Naive thymus-derived CD8-positive, alpha-beta T cell (primary cell): ENCODE measurements at regions of chr16 and their contacts with region 1.

Region 1: DNA sequence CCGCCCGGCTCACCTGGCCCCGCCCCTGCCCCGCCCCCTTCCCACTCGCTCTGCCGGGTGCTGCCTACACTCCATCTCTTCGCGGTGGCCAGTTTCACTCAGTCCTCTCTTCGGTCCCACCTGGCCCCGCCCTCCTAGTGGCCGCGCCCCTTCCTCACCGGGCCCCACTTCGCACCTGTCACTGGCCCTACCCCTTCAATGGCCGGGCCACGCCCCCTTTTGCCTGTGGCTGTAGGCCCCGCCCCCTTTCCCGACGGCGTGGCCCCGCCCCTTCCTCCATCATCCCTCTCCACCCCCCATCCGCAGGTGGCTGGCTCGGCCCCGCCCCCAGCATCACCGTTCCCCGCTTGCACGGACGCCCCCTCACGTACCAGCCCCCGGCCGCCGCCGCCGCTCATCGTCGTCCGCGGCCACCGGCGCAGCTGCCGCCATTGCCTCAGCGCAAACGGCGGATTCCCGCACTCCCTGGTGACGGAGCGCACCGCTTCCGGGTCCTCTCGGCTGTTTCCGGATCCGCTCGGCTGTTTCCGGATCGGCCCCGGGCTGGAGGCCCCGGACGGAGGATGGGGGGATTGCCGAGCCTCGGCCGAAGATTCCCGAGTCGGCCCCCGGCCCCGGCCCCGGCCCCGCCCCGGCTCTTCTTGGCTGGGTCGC is at the start of gene RABEP2:
- DNase-seq: peak; percentile 90 to 100 (median 96)
- ATAC-seq: peak; percentile 85 to 88
- H3K4me3 Mint-ChIP-seq: peak within 1 kb of the TSS; percentile 85 to 98 (median 95)
- H3K27ac Mint-ChIP-seq: peak within 1 kb of the TSS; percentile 95 to 99 (median 98)
- H3K4me1 Mint-ChIP-seq: peaks cover 19 to 31% (median 25%) of the 10 kb centered on the region in 4 donors
- H3K27me3 Mint-ChIP-seq: no peaks in the 10 kb centered on the region
- polyA plus RNA-seq, gene RABEP2: 2.8 to 6.5 (median 3.0) TPM

Region 2: DNA sequence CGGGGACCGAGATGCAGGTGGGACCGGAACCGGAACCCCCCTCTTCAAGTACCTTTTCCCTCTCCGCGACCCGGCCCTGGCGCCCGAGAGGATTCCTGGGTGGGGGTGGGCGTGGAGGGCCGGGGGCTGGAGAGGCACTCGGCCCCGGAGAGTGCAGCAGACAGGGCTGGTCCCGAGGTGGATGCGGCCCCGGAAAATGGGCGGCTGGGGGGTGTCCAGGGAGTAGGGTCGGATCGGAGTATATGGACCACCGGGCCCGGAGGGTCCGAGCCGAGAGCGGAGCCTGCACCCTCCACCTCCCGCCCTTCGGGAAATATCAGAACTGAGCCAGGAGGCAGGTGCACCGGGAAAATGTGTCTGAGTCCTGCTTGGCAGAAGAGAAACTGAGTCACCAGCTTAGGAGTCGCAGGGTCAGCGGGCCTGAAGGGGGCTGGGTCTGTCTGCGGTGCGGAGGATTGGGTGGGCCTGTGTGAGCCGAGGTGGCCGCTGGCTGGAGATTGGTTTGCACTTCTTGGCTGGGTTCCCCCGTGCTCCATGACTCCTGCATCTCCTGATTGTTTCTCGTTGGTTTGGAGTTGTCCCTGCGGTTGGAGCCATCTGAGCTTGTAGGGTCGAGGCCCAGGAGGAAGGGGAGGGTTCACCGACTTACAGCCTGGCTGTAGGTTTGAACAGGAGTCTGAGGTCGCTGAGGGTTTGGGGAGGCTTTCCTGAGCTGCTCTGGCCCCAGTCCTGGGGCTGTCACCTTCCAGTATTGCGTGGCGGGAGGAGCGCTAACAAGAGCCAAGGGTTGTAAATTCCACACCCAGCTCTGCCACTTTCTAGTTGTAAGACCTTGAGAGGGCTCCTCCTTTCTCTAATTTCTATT is 60.7 kb before region 1 on chr16:
- POLR2A ChIA-PET with region 1: interaction called, 26 read pairs
- DNase-seq: peak in 5 of 10 donors; percentile 17 to 29 (median 21)
- ATAC-seq: no peak
- H3K4me3 Mint-ChIP-seq: peak overlapping the region; percentile 98 to 100 (median 98)
- H3K27ac Mint-ChIP-seq: peak overlapping the region; percentile 96 to 100 (median 99)
- H3K4me1 Mint-ChIP-seq: peaks cover 17 to 39% (median 34%) of the 10 kb centered on the region in 4 donors
- H3K27me3 Mint-ChIP-seq: no peaks in the 10 kb centered on the region

Region 3: DNA sequence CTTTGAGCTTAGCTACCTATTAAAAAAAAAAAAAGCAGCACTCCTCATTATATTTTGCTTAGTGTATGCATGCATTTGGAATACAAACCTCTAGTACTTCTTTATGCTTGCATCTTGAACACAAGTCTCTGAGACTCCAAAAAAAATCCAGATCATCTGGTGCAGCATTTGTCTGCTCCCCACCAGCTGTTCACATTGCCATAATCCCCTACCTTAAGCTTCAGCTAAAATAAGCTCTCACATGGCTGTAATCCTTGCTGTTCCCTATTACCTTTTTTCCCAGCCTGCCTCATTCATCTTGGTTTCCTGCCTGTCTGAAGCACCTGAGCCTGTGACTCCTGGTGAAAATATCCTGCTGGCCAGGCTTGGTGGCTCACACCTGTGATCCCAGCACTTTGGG is 18.4 kb after region 1 on chr16:
- POLR2A ChIA-PET with region 1: interaction called, 13 read pairs
- DNase-seq: no peak
- ATAC-seq: no peak
- H3K4me3 Mint-ChIP-seq: no peak overlapping the region
- H3K27ac Mint-ChIP-seq: no peak overlapping the region
- H3K4me1 Mint-ChIP-seq: peaks cover 9 to 14% (median 12%) of the 10 kb centered on the region in 4 donors
- H3K27me3 Mint-ChIP-seq: no peaks in the 10 kb centered on the region

Region 4: GRCh38 chr16:28950648-28951409 is 26.0 kb after region 1 on chr16 and contains the start of gene NFATC2IP:
- POLR2A ChIA-PET with region 1: interaction called, 12 read pairs
- DNase-seq: peak; percentile 97 to 100 (median 99)
- ATAC-seq: peak; percentile 95 to 96
- H3K4me3 Mint-ChIP-seq: peak within 1 kb of the TSS; percentile 87 to 100 (median 96)
- H3K27ac Mint-ChIP-seq: peak within 1 kb of the TSS; percentile 90 to 99 (median 94)
- H3K4me1 Mint-ChIP-seq: peaks cover 15 to 36% (median 31%) of the 10 kb centered on the region in 4 donors
- H3K27me3 Mint-ChIP-seq: no peaks in the 10 kb centered on the region
- polyA plus RNA-seq, gene NFATC2IP: 22.8 to 30.2 (median 28.7) TPM